Activated B cell treated with CpG ODN at 0.5 μM for 24 hours (primary cell): ENCODE measurements at regions of chr12 and their contacts with region 1.

Region 1: DNA sequence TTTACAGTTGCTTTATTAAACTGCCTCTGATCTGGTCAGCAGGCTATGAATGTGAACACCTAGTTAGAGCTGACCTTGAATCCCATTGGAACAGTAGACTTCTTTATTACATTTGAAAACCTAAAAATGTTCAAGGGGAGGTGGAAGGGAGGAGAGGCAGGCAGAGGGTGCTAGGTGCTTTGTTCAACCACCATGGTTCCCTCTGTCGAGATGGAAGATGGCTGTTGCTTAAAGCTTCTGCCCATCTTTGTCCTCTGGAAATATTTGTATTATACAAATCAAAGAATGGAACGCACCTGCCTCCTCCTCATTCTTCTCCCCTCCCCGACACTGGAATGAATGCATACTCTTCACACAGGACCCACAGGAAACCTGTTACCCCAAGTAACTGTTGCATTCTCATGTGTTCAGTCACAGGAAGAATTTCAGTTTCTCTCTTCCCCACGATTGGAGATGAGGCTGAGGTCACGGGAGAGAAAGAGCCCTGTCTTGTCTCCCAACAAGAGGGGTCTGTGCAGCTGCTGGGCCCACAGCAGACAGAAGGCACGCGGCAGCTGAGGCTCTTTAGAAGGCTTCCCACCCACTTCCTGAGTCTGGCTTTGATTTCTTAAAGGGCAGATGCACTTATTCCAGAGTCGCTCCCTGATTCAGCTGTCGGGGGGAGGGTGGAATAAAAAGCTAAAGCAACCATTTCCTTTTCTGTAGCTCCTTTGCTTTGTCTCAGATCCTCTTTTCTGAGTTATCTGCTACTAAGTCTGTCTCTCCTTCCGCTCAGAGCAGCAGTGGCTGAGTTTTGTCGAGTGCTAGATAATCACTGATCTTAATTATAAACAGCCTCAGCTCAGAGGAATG is 217.9 kb upstream of the BTG1 start:
- DNase-seq: peak; percentile 50
- ATAC-seq: peak; percentile 75
- H3K4me3 Mint-ChIP-seq: peak overlapping the region; percentile 88
- H3K27ac Mint-ChIP-seq: peak overlapping the region; percentile 98
- H3K4me1 Mint-ChIP-seq: peaks cover 76% of the 10 kb centered on the region
- H3K27me3 Mint-ChIP-seq: no peaks in the 10 kb centered on the region
- CTCF ChIP-seq: no peak

Region 2: GRCh38 chr12:91382081-91382543 is 981.4 kb before region 1 on chr12:
- CTCF ChIA-PET with region 1: no interaction called
- POLR2A ChIA-PET with region 1: no interaction called
- intact Hi-C with region 1: loop called (anchors 1 kb)
- DNase-seq: peak; percentile 63
- ATAC-seq: peak; percentile 78
- H3K4me3 Mint-ChIP-seq: peak overlapping the region; percentile 76
- H3K27ac Mint-ChIP-seq: peak overlapping the region; percentile 35
- H3K4me1 Mint-ChIP-seq: peaks cover 4% of the 10 kb centered on the region
- H3K27me3 Mint-ChIP-seq: no peaks in the 10 kb centered on the region
- CTCF ChIP-seq: peak; percentile 62

Region 3: GRCh38 chr12:92136965-92137721 is 226.4 kb before region 1 on chr12:
- CTCF ChIA-PET with region 1: interaction called, 3 read pairs
- POLR2A ChIA-PET with region 1: interaction called, 344 read pairs
- intact Hi-C with region 1: no loop called
- DNase-seq: no peak
- ATAC-seq: no peak
- H3K4me3 Mint-ChIP-seq: peak overlapping the region; percentile 98
- H3K27ac Mint-ChIP-seq: peak overlapping the region; percentile 69
- H3K4me1 Mint-ChIP-seq: peaks cover 78% of the 10 kb centered on the region
- H3K27me3 Mint-ChIP-seq: no peaks in the 10 kb centered on the region
- CTCF ChIP-seq: no peak

Region 4: GRCh38 chr12:92208613-92209121 is 154.9 kb before region 1 on chr12:
- CTCF ChIA-PET with region 1: interaction called, 3 read pairs
- POLR2A ChIA-PET with region 1: interaction called, 18 read pairs
- intact Hi-C with region 1: no loop called
- DNase-seq: no peak
- ATAC-seq: peak; percentile 84
- H3K4me3 Mint-ChIP-seq: peak overlapping the region; percentile 61
- H3K27ac Mint-ChIP-seq: peak overlapping the region; percentile 70
- H3K4me1 Mint-ChIP-seq: peaks cover 28% of the 10 kb centered on the region
- H3K27me3 Mint-ChIP-seq: no peaks in the 10 kb centered on the region
- CTCF ChIP-seq: no peak

Region 5: GRCh38 chr12:92396647-92397252 is 33.2 kb after region 1 on chr12:
- CTCF ChIA-PET with region 1: interaction called, 3 read pairs
- POLR2A ChIA-PET with region 1: interaction called, 32 read pairs
- intact Hi-C with region 1: no loop called
- DNase-seq: no peak
- ATAC-seq: no peak
- H3K4me3 Mint-ChIP-seq: no peak overlapping the region
- H3K27ac Mint-ChIP-seq: peak overlapping the region; percentile 93
- H3K4me1 Mint-ChIP-seq: peaks cover 70% of the 10 kb centered on the region
- H3K27me3 Mint-ChIP-seq: no peaks in the 10 kb centered on the region
- CTCF ChIP-seq: no peak

Region 6: GRCh38 chr12:92445253-92446082 is 81.9 kb after region 1 on chr12:
- CTCF ChIA-PET with region 1: interaction called, 15 read pairs
- POLR2A ChIA-PET with region 1: interaction called, 87 read pairs
- intact Hi-C with region 1: loop called (anchors 1 kb)
- DNase-seq: peak; percentile 55
- ATAC-seq: peak; percentile 71
- H3K4me3 Mint-ChIP-seq: peak overlapping the region; percentile 67
- H3K27ac Mint-ChIP-seq: peak overlapping the region; percentile 97
- H3K4me1 Mint-ChIP-seq: peaks cover 95% of the 10 kb centered on the region
- H3K27me3 Mint-ChIP-seq: no peaks in the 10 kb centered on the region
- CTCF ChIP-seq: no peak

Region 7: GRCh38 chr12:92505254-92506231 is 142.0 kb after region 1 on chr12:
- CTCF ChIA-PET with region 1: no interaction called
- POLR2A ChIA-PET with region 1: interaction called, 15 read pairs
- intact Hi-C with region 1: loop called (anchors 2 kb)
- DNase-seq: peak; percentile 20
- ATAC-seq: peak; percentile 47
- H3K4me3 Mint-ChIP-seq: peak overlapping the region; percentile 77
- H3K27ac Mint-ChIP-seq: peak overlapping the region; percentile 94
- H3K4me1 Mint-ChIP-seq: peaks cover 64% of the 10 kb centered on the region
- H3K27me3 Mint-ChIP-seq: no peaks in the 10 kb centered on the region
- CTCF ChIP-seq: no peak

Region 8: GRCh38 chr12:92639017-92639416 is 275.5 kb after region 1 on chr12:
- CTCF ChIA-PET with region 1: no interaction called
- POLR2A ChIA-PET with region 1: no interaction called
- intact Hi-C with region 1: no loop called
- DNase-seq: no peak
- ATAC-seq: no peak
- H3K4me3 Mint-ChIP-seq: no peak overlapping the region
- H3K27ac Mint-ChIP-seq: no peak overlapping the region
- H3K4me1 Mint-ChIP-seq: no peaks in the 10 kb centered on the region
- H3K27me3 Mint-ChIP-seq: no peaks in the 10 kb centered on the region
- CTCF ChIP-seq: no peak